Right cardiac atrium (tissue), 5 donors: ENCODE measurements at regions of chr15 and their contacts with region 1.

Region 1: DNA sequence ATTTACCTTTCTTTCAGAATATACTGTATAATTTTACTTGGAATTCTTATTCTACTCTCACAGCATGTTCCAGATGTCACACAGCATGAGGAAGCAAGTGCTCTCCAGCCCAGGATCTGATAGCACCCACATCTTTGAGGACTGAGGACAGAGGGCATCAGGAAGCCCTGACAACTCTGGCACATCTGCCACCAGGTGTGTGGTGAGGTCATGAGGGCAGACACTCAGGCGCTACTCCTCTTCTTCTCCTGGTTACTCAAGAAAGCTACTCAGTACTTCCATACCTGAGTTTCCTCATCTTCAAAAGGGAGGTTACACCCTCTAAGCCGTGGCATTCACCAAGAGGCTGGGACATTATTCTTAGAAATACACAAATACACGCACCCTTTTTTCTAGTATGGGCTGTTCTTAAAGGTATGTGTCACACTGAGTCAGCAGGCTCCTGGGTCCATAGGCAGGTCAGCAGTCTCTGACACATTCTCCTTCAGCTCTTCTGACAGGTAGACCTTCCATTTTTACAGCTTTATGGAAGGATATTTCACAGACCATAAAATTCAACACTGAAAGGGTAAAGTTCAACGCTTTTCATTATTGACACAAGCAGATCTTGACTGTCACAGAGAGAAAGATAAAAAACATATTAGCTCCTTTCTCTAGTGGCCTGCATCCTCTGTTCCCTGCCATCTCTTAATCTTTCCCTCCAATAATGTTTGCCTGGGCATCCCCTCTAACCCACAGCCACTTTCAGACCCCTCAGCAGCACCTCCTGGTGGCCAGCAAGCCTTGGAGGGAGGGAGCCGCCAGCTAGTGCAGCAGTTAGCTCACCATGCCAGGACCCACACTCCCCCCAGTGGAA is 103.2 kb upstream of the TJP1 start:
- DNase-seq: peak; percentile 79 to 92 (median 87)
- ATAC-seq: peak; percentile 94 to 95
- H3K4me3 ChIP-seq: no peak overlapping the region
- H3K27ac ChIP-seq: peak overlapping the region; percentile 58
- H3K4me1 ChIP-seq: peaks cover 2% of the 10 kb centered on the region
- H3K27me3 ChIP-seq: no peaks in the 10 kb centered on the region

Region 2: GRCh38 chr15:29747837-29748417 is 177.5 kb before region 1 on chr15:
- intact Hi-C with region 1: loop called in 1 of 4 experiments (anchors 10 kb)
- DNase-seq: no peak
- ATAC-seq: no peak
- H3K4me3 ChIP-seq: no peak overlapping the region
- H3K27ac ChIP-seq: no peak overlapping the region
- H3K4me1 ChIP-seq: no peaks in the 10 kb centered on the region
- H3K27me3 ChIP-seq: no peaks in the 10 kb centered on the region

Region 3: GRCh38 chr15:29765898-29766527 is 159.4 kb before region 1 on chr15:
- intact Hi-C with region 1: loop called in 1 of 4 experiments (anchors 10 kb)
- DNase-seq: peak in 2 of 3 donors; percentile 48 to 79
- ATAC-seq: peak; percentile 69 to 74
- H3K4me3 ChIP-seq: no peak overlapping the region
- H3K27ac ChIP-seq: no peak overlapping the region
- H3K4me1 ChIP-seq: peaks cover 6% of the 10 kb centered on the region
- H3K27me3 ChIP-seq: no peaks in the 10 kb centered on the region

Region 4: DNA sequence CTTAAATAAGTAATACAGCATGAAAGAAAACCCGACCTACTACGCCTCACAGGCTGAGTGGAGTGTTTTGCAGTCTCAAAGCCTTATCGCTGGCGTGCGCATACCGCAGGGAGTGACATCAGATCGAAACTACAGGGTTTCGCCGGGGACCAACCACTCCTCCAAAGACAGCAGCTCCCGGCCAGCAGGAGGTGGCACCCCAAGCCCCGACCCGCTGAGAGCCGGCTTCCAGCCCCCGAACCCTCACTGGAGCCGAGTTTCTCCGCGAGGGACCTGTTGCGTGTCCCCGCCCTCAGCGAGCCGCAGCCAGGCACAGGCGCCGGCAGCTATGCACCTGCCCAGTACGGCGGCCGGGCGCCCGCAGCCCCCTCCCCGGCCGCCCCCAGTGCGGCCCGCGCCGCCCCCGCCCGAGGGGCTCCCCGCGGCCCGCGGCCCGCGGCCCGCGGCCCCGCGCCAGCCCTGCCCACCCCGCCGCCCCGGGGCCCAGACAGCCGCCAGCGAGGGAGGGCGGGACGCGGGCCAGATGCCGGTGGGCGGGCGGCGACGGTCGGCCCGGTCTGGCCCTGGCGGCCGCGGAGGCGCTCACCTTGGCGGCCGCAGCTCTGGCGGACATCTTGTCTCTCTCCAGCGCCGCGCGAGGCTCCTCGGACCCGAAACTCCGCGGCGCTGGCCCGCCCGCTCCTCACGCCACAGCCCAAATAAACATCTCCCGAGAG is 103.9 kb before region 1 on chr15:
- intact Hi-C with region 1: loop called in 3 of 4 experiments (anchors 5 to 10 kb)
- DNase-seq: peak; percentile 79 to 87 (median 87)
- ATAC-seq: peak; percentile 69 to 74
- H3K4me3 ChIP-seq: peak overlapping the region; percentile 98
- H3K27ac ChIP-seq: peak overlapping the region; percentile 94
- H3K4me1 ChIP-seq: peaks cover 2% of the 10 kb centered on the region
- H3K27me3 ChIP-seq: no peaks in the 10 kb centered on the region

Region 5: GRCh38 chr15:29978411-29979382 is 53.2 kb after region 1 on chr15:
- intact Hi-C with region 1: no loop called
- DNase-seq: no peak
- ATAC-seq: peak in 1 of 2 donors; percentile 11
- H3K4me3 ChIP-seq: no peak overlapping the region
- H3K27ac ChIP-seq: no peak overlapping the region
- H3K4me1 ChIP-seq: no peaks in the 10 kb centered on the region
- H3K27me3 ChIP-seq: no peaks in the 10 kb centered on the region